Activated CD4-positive, alpha-beta T cell treated with anti-CD3 and anti-CD28 coated beads for 36 hours (primary cell): ENCODE measurements at regions of chr12 and their contacts with region 1.

Region 1: DNA sequence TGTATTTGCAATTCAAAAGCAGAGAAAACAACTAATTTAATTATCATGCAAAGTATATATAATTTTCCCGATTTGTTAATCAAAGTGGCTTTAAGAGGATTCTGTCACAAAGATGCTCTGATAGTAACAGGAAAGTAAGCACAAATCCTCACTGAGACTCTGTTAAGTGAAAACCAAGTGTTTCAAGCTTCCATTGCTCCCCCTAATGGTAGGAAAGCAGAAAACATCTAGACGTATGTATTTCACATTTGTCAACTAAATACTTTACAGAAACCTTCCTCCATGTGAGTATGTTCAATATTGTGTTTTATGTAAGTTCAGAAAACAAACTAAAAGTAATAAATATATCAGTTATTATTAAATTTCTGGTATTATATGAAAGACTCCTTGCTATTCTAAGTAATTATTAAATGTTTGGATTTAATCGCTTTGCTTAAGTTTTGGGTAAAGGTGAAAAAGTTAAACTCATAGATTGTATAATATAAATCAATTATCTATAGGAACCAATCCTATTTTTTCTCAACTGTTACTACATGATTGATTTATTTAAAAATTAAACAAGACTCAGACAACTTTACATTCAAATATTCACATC is 1.5 kb upstream of the NTS start:
- DNase-seq: no peak
- ATAC-seq: no peak
- H3K4me3 Mint-ChIP-seq: no peak overlapping the region
- H3K27ac Mint-ChIP-seq: no peak overlapping the region
- H3K4me1 Mint-ChIP-seq: no peaks in the 10 kb centered on the region
- H3K27me3 Mint-ChIP-seq: no peaks in the 10 kb centered on the region

Region 2: DNA sequence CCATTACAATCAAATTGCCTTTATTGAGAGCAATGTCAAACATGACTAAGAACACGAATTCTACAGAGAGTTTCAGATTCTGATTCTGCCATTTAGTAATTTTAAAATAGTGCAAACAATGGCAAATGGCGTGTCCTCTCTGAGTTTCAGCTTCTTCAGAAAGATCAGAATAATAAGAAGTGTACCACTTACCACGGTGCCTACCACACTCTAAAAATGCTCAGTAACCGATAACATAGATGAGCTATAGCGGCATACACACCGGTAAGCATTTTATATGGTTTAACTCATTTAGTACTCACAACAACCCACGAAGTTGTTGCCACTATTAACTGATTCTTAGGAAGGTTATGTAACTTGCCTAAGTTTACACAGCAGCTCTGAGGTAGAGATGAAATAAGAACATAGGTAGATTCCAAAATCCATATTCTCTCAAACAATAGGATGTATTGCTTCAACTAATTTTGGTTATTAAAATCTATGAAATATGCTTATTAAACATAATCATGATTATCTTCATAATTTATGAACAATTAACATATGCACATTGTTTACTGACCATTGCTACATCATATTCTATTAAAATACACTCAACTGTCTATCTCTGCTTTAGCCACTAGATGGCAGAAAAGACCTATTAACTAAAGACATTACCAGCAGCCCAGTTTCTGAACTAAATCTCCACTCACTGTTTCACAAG is 998.3 kb before region 1 on chr12:
- CTCF ChIA-PET with region 1: interaction called, 3 read pairs
- POLR2A ChIA-PET with region 1: no interaction called
- intact Hi-C with region 1: loop called in 1 of 2 experiments (anchors 5 kb)
- DNase-seq: no peak
- ATAC-seq: peak; percentile 53
- H3K4me3 Mint-ChIP-seq: no peak overlapping the region
- H3K27ac Mint-ChIP-seq: no peak overlapping the region
- H3K4me1 Mint-ChIP-seq: no peaks in the 10 kb centered on the region
- H3K27me3 Mint-ChIP-seq: peaks cover 5% of the 10 kb centered on the region

Region 3: DNA sequence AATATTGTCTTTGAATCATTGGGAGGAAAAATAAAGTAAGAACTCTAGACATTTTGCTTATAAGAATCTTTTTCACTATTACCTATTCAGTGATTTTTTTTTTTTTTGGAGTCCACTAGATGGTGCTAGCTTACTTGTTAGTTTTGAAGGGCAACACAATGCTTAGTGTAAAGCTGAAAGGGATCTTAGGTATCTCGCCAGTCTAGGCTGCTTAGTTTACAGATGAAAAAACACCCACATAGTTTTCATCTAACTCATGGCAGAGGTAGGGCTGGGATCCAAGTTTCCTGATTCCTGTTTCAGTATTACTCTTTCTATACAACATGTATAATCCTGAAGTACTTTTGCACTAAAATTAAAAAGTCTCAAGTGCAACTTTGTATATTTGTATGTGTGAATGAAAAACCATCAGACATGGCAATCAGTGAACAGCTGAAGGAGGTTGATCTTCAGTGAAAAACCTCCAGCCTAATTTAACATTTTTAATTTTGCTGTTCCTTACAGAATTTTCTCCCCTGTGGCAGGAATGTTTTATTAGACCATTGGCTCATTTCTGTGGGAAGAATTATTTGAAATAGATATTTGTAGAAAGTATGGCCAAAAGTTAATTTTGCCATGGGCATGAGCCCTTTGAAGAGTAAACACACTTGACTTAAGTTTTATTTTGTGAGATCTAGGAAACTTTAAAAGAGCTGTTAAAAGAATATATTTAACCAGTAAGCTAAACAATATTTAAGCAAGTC is 795.7 kb before region 1 on chr12:
- CTCF ChIA-PET with region 1: no interaction called
- POLR2A ChIA-PET with region 1: no interaction called
- intact Hi-C with region 1: loop called (anchors 1 to 5 kb)
- DNase-seq: no peak
- ATAC-seq: peak; percentile 60
- H3K4me3 Mint-ChIP-seq: no peak overlapping the region
- H3K27ac Mint-ChIP-seq: no peak overlapping the region
- H3K4me1 Mint-ChIP-seq: no peaks in the 10 kb centered on the region
- H3K27me3 Mint-ChIP-seq: no peaks in the 10 kb centered on the region

Region 4: GRCh38 chr12:85468356-85469157 is 404.0 kb before region 1 on chr12:
- CTCF ChIA-PET with region 1: interaction called, 10 read pairs
- POLR2A ChIA-PET with region 1: no interaction called
- intact Hi-C with region 1: loop called (anchors 1 kb)
- DNase-seq: peak; percentile 61
- ATAC-seq: peak; percentile 80
- H3K4me3 Mint-ChIP-seq: peak overlapping the region; percentile 56
- H3K27ac Mint-ChIP-seq: peak overlapping the region; percentile 49
- H3K4me1 Mint-ChIP-seq: peaks cover 14% of the 10 kb centered on the region
- H3K27me3 Mint-ChIP-seq: peaks cover 6% of the 10 kb centered on the region

Region 5: DNA sequence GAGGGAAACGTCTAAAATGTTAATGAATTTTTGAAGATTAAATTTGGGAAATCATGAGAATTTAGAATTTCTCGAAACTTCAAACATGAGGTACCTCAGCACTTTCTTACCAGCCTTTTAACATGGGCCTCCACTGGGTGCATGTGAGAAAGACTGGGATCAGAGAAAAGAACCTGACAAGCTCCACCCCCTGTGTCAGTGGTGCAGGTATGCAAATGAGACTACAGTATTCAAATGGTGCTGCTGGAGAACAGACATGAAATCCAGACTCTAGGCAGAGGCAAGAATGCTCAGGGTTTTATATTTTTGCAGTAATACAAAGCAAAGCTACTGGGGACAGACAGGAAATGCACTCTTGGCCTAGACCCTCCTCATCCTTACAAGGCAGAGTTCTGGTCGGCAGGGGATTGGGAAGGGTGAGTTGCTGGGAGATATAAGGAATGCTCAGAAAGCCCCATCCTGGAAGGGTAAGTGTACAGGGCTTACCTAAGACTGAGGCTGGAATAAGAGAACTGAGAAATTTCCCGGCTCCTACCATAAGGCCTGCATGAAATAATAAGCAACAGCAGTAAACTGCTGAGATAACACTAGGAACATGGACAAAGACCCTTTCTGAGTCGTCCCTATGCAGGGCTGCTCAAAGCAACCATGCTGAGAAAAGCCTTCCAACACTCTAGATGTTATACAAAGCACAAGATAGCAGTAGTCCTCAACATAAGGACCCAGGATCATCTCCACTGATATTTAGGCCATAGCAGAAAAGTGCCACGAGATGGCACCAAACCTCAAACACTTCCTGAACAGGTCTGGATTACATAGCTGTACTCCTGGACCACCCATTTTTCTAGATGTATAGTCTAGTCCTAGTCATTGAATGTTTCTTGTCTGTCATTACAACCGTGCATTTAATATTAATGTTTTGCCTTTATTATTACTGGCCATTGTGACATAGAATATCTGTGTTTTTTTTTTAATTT is 297.2 kb before region 1 on chr12:
- CTCF ChIA-PET with region 1: interaction called, 12 read pairs
- POLR2A ChIA-PET with region 1: no interaction called
- intact Hi-C with region 1: loop called (anchors 1 to 2 kb)
- DNase-seq: peak; percentile 53
- ATAC-seq: peak; percentile 68
- H3K4me3 Mint-ChIP-seq: no peak overlapping the region
- H3K27ac Mint-ChIP-seq: no peak overlapping the region
- H3K4me1 Mint-ChIP-seq: no peaks in the 10 kb centered on the region
- H3K27me3 Mint-ChIP-seq: no peaks in the 10 kb centered on the region